ENCODE measurements at regions of chr2 and their contacts with region 1.

Region 1: GRCh38 chr2:176821345-176821744 is 391.2 kb upstream of the HNRNPA3 start:
- DNase-seq: no peak
- CTCF ChIP-seq: no peak

Region 2: DNA sequence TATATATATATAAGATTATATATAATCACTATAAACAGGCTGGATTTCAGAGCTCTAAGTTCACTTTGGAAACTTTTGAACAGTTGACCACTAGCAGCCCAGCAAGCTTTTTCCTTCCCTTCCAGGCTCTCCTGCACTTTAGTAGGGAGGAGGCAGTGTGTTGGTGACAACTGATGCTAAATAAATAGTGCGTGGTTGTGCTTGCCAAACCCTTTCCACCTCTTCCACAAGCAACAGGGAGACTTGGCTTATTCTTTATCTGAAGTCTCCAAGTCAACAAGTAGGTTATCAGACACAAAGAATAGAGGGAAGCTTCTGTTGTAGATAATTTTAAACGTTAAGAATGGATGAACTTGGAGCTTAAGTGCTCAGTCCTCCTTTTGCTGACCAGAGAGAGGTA is 17.0 kb before region 1 on chr2:
- CTCF ChIA-PET with region 1: interaction called, 40 read pairs
- POLR2A ChIA-PET with region 1: no interaction called
- DNase-seq: no peak
- CTCF ChIP-seq: no peak

Region 3: GRCh38 chr2:176997074-176997791 is 175.9 kb after region 1 on chr2:
- CTCF ChIA-PET with region 1: no interaction called
- POLR2A ChIA-PET with region 1: no interaction called
- DNase-seq: peak; percentile 19
- CTCF ChIP-seq: no peak